ENCODE measurements at regions of chr4 and their contacts with region 1.

Region 1: DNA sequence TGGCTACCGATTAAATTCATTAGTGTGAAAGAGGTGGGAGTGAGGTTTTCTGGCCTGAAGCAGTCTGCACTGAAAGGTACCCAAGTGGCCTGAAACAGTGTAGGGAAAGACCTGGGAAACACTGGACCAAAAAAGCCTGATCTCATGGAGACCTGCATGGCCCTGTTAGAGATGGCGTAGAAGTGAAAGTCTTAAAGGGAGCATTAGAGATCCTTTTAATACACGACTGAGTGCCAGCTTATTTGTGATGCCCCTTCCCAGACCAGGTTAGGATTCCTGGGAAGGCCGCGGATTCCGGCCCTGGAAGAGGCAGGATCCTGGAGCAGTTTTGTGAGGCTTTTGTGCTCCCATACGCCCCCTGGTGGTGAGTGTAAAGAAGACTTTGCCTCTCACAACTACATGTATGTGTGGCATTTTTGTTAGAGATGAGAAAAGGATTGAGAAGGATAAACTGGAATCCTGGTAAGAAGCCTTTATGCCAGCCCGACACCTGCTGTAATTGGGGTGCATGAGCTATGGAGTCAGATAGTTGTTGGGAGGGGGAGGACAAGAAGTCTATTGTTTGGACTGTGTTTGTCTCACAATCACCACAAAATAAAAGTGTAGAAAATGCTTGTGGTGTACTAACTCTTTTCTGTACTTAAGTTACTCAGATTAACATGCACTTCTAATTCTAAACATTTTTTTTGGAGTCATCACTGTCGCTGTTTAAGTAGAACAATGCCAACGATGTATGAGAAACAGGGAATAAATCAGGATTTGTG is 54.0 kb downstream of the JADE1 start:
- DNase-seq: peak; percentile 43 to 63 (median 46)
- H3K4me3 ChIP-seq: no peak overlapping the region
- H3K4me3 Mint-ChIP-seq: no peak overlapping the region
- H3K27ac ChIP-seq: peak overlapping the region in 1 of 2 donors; percentile 32
- H3K27ac Mint-ChIP-seq: peak overlapping the region in 2 of 7 donors; percentile 35 to 61
- H3K4me1 ChIP-seq: peaks cover 18 to 23% of the 10 kb centered on the region in 2 donors
- H3K4me1 Mint-ChIP-seq: peaks cover 26% of the 10 kb centered on the region
- H3K27me3 ChIP-seq: no peaks in the 10 kb centered on the region
- H3K27me3 Mint-ChIP-seq: peaks cover 0 to 2% (median 0%) of the 10 kb centered on the region in 3 donors
- CTCF ChIP-seq: peak; percentile 96

Region 2: DNA sequence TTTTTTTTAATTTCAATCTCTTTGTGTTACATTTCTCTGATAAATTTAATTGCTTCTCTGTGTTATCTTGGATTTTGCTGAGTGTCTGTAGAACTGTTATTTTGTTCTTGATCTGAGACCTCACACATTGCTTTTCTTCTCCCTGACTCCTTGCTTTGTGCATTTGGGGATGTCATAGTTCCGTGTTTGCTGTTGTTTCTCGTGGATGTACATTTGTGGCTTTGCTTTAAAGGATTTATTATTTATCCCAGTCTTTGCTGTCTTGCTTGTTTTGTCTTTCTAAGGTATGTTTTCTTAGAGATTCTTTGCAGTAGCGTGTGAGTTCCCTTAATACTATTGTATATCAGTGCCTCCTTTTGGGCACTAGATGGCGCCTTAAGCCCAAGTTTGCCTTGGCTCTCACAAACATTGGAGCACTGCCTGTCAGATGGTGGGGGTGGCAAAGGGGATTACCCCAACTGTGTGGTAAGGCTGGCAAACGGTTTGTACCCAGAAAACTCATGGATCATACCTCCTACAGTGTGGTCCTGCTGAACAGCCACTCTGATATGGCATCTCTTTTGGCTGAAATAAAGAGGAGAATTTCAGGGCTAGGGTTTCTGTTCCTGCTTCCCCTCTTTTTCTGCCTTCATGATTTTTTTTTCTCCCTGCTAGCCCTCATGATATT is 672.2 kb before region 1 on chr4:
- intact Hi-C with region 1: loop called in 1 of 2 experiments (anchors 5 kb)
- DNase-seq: peak; percentile 65 to 79 (median 71)
- H3K4me3 ChIP-seq: no peak overlapping the region
- H3K4me3 Mint-ChIP-seq: no peak overlapping the region
- H3K27ac ChIP-seq: no peak overlapping the region
- H3K27ac Mint-ChIP-seq: no peak overlapping the region
- H3K4me1 ChIP-seq: no peaks in the 10 kb centered on the region
- H3K4me1 Mint-ChIP-seq: peaks cover 4% of the 10 kb centered on the region
- H3K27me3 ChIP-seq: no peaks in the 10 kb centered on the region
- H3K27me3 Mint-ChIP-seq: peaks cover 0 to 2% (median 0%) of the 10 kb centered on the region in 3 donors
- CTCF ChIP-seq: peak; percentile 87

Region 3: GRCh38 chr4:128454281-128455075 is 409.0 kb before region 1 on chr4:
- intact Hi-C with region 1: loop called in 1 of 2 experiments (anchors 10 kb)
- DNase-seq: peak; percentile 17 to 55 (median 47)
- H3K4me3 ChIP-seq: no peak overlapping the region
- H3K4me3 Mint-ChIP-seq: no peak overlapping the region
- H3K27ac ChIP-seq: no peak overlapping the region
- H3K27ac Mint-ChIP-seq: no peak overlapping the region
- H3K4me1 ChIP-seq: no peaks in the 10 kb centered on the region
- H3K4me1 Mint-ChIP-seq: peaks cover 2% of the 10 kb centered on the region
- H3K27me3 ChIP-seq: no peaks in the 10 kb centered on the region
- H3K27me3 Mint-ChIP-seq: peaks cover 0 to 2% (median 0%) of the 10 kb centered on the region in 3 donors
- CTCF ChIP-seq: peak; percentile 70